Right cardiac atrium (tissue), 5 donors: ENCODE measurements at regions of chr5 and their contacts with region 1.

Region 1: GRCh38 chr5:141369994-141370848 is at the start of gene PCDHGB3:
- DNase-seq: peak in 2 of 3 donors; percentile 68 to 75
- ATAC-seq: peak; percentile 81 to 87
- H3K4me3 ChIP-seq: peak within 1 kb of the TSS; percentile 39
- H3K27ac ChIP-seq: no peak within 1 kb of the TSS
- H3K4me1 ChIP-seq: no peaks in the 10 kb centered on the region
- H3K27me3 ChIP-seq: no peaks in the 10 kb centered on the region
- total RNA-seq, gene PCDHGB3: 4.8 to 5.5 (median 5.1) TPM

Region 2: GRCh38 chr5:141320225-141321169 is 49.7 kb before region 1 on chr5 and contains the start of gene TAF7:
- intact Hi-C with region 1: no loop called
- DNase-seq: peak; percentile 92 to 97 (median 96)
- ATAC-seq: peak; percentile 99 to 100
- H3K4me3 ChIP-seq: peak within 1 kb of the TSS; percentile 78
- H3K27ac ChIP-seq: peak within 1 kb of the TSS; percentile 93
- H3K4me1 ChIP-seq: no peaks in the 10 kb centered on the region
- H3K27me3 ChIP-seq: no peaks in the 10 kb centered on the region
- total RNA-seq, gene TAF7: 86.7 to 109 (median 95.1) TPM

Region 3: GRCh38 chr5:141420855-141421496 is 50.8 kb after region 1 on chr5 and contains the start of gene PCDHGA11:
- intact Hi-C with region 1: loop called in 1 of 4 experiments (anchors 10 kb)
- DNase-seq: peak in 1 of 3 donors; percentile 56
- ATAC-seq: peak in 1 of 2 donors; percentile 39
- H3K4me3 ChIP-seq: peak within 1 kb of the TSS; percentile 49
- H3K27ac ChIP-seq: no peak within 1 kb of the TSS
- H3K4me1 ChIP-seq: peaks cover 2% of the 10 kb centered on the region
- H3K27me3 ChIP-seq: no peaks in the 10 kb centered on the region
- total RNA-seq, gene PCDHGA11: 3.1 to 4.2 (median 3.6) TPM